ENCODE measurements at regions of chr6 and their contacts with region 1.

Region 1: DNA sequence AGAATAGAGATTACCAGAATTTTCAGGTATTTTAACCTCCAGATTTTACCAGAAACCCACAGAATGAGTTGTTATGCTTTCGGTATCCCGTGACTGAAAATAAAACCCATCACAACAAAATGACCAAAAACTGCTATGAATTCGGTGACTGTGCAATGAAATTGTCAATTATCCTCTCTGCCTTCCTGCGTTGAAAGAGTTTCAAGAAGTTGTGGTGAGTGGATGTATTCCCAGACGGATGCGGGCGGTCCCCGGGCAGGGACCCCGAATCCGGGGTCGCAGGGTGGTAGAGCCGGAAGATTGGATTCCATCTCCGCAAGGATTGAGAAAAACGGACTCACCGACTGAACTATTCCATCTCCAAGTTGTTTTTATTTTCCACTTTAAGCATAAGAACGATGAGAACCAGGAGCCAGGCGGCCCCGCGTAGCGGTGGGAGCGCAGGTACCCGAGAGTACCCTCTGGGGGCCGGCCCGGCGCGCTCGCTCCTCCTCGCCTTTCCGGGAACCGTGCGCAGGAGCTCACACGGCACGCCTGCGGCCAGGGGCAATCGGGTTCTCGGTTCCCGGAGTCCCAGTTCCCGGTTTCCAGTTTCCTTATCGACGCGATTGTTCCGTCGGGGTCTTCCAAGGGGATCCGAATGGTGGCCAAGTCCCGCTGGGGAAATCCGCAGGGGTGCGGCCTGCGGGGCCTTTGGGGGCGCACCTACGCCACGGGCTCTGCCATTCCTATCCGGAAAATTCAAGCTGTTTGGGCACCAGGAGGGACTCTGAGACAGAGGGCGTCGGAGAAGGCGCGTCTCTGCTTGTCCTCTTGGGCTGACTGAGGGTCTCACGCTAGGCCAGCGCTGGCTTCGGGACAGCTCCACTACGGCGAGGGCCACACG is 104.9 kb upstream of the PRDM1 start:
- DNase-seq: peak in 11 of 14 experiments; percentile 15 to 61 (median 31)
- ATAC-seq: peak; percentile 85
- H3K4me3 ChIP-seq: peak overlapping the region; percentile 62
- H3K4me3 Mint-ChIP-seq: peak overlapping the region; percentile 84
- H3K27ac ChIP-seq: no peak overlapping the region
- H3K27ac Mint-ChIP-seq: no peak overlapping the region
- H3K4me1 ChIP-seq: peaks cover 20% of the 10 kb centered on the region
- H3K4me1 Mint-ChIP-seq: peaks cover 36% of the 10 kb centered on the region
- H3K27me3 ChIP-seq: peaks cover 35 to 38% of the 10 kb centered on the region in 2 experiments
- H3K27me3 Mint-ChIP-seq: peaks cover 70% of the 10 kb centered on the region
- CTCF ChIP-seq: no peak

Region 2: GRCh38 chr6:106501960-106502371 is 520.7 kb after region 1 on chr6:
- CTCF ChIA-PET with region 1: no interaction called
- POLR2A ChIA-PET with region 1: no interaction called
- intact Hi-C with region 1: no loop called
- DNase-seq: peak in 1 of 14 experiments; percentile 37
- ATAC-seq: no peak
- H3K4me3 ChIP-seq: no peak overlapping the region
- H3K4me3 Mint-ChIP-seq: no peak overlapping the region
- H3K27ac ChIP-seq: no peak overlapping the region
- H3K27ac Mint-ChIP-seq: no peak overlapping the region
- H3K4me1 ChIP-seq: no peaks in the 10 kb centered on the region
- H3K4me1 Mint-ChIP-seq: no peaks in the 10 kb centered on the region
- H3K27me3 ChIP-seq: no peaks in the 10 kb centered on the region
- H3K27me3 Mint-ChIP-seq: no peaks in the 10 kb centered on the region
- CTCF ChIP-seq: no peak

Region 3: DNA sequence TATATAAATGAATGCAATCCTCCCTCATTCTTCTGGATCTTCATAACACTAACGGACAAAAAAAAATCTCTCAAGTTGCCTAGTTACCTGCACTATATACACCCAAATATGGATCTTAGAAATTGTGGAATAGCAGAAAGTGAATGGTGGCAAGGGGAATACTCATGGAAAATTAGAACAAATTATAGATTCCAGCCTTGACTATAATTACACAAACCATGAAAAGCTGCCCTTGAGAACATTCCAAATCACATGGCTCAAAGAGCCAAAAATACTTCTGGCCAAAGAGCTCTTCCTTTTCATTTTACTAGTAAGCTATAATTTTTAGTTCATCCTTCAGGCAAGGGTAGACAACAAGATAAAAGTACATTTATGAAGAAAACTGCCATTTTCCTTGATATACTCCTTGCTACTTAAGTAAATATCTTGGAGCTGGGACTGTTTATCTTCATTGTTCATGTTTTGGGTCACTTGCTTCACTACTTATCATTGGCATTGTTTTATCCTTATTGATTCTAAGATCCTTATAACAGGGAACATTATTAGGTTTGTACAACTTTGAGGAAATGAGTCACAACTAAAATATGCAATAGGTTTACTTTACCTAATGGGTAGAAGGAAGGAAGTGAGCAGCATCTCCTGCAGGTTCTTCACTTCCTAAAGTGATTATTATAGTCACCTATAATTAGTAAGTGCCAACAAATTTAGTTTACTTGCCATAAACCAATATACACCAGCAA is 1040.4 kb after region 1 on chr6:
- CTCF ChIA-PET with region 1: no interaction called
- POLR2A ChIA-PET with region 1: no interaction called
- intact Hi-C with region 1: loop called in 1 of 2 experiments (anchors 10 kb)
- DNase-seq: no peak
- ATAC-seq: no peak
- H3K4me3 ChIP-seq: no peak overlapping the region
- H3K4me3 Mint-ChIP-seq: no peak overlapping the region
- H3K27ac ChIP-seq: no peak overlapping the region
- H3K27ac Mint-ChIP-seq: no peak overlapping the region
- H3K4me1 ChIP-seq: no peaks in the 10 kb centered on the region
- H3K4me1 Mint-ChIP-seq: no peaks in the 10 kb centered on the region
- H3K27me3 ChIP-seq: no peaks in the 10 kb centered on the region
- H3K27me3 Mint-ChIP-seq: no peaks in the 10 kb centered on the region
- CTCF ChIP-seq: no peak